CD4-positive, alpha-beta memory T cell (primary cell): ENCODE measurements at regions of chr7 and their contacts with region 1.

Region 1: GRCh38 chr7:150514748-150515222 is at the start of gene GIMAP7:
- DNase-seq: peak; percentile 77 to 84 (median 79)
- H3K4me3 ChIP-seq: peak within 1 kb of the TSS; percentile 92 to 99
- H3K4me3 Mint-ChIP-seq: peak within 1 kb of the TSS; percentile 97 to 100 (median 100)
- H3K27ac ChIP-seq: peak within 1 kb of the TSS; percentile 77
- H3K27ac Mint-ChIP-seq: peak within 1 kb of the TSS; percentile 94 to 99 (median 97)
- H3K4me1 ChIP-seq: peaks cover 47% of the 10 kb centered on the region
- H3K4me1 Mint-ChIP-seq: peaks cover 36 to 54% (median 42%) of the 10 kb centered on the region in 4 donors
- H3K27me3 ChIP-seq: no peaks in the 10 kb centered on the region
- H3K27me3 Mint-ChIP-seq: no peaks in the 10 kb centered on the region
- total RNA-seq, gene GIMAP7: 464 to 476 TPM

Region 2: GRCh38 chr7:148623586-148624282 is 1891.1 kb before region 1 on chr7:
- CTCF ChIA-PET with region 1: no interaction called
- POLR2A ChIA-PET with region 1: no interaction called
- intact Hi-C with region 1: no loop called
- DNase-seq: no peak
- H3K4me3 ChIP-seq: no peak overlapping the region
- H3K4me3 Mint-ChIP-seq: no peak overlapping the region
- H3K27ac ChIP-seq: no peak overlapping the region
- H3K27ac Mint-ChIP-seq: no peak overlapping the region
- H3K4me1 ChIP-seq: peaks cover 21% of the 10 kb centered on the region
- H3K4me1 Mint-ChIP-seq: peaks cover 23 to 47% (median 32%) of the 10 kb centered on the region in 4 donors
- H3K27me3 ChIP-seq: no peaks in the 10 kb centered on the region
- H3K27me3 Mint-ChIP-seq: peaks cover 12 to 20% of the 10 kb centered on the region in 2 donors

Region 3: GRCh38 chr7:150322833-150323681 is 191.7 kb before region 1 on chr7 and contains the starts of genes ACTR3C and LRRC61:
- CTCF ChIA-PET with region 1: no interaction called
- POLR2A ChIA-PET with region 1: no interaction called
- intact Hi-C with region 1: no loop called
- DNase-seq: peak in 4 of 5 donors; percentile 40 to 54 (median 46)
- H3K4me3 ChIP-seq: peak within 1 kb of the TSS; percentile 82 to 96
- H3K4me3 Mint-ChIP-seq: peak within 1 kb of the TSS; percentile 90 to 99 (median 98)
- H3K27ac ChIP-seq: peak within 1 kb of the TSS; percentile 82
- H3K27ac Mint-ChIP-seq: peak within 1 kb of the TSS; percentile 84 to 99 (median 98)
- H3K4me1 ChIP-seq: peaks cover 44% of the 10 kb centered on the region
- H3K4me1 Mint-ChIP-seq: peaks cover 31 to 49% (median 40%) of the 10 kb centered on the region in 4 donors
- H3K27me3 ChIP-seq: no peaks in the 10 kb centered on the region
- H3K27me3 Mint-ChIP-seq: no peaks in the 10 kb centered on the region
- total RNA-seq, gene ACTR3C: 13.0 to 17.8 TPM
- total RNA-seq, gene LRRC61: 11.0 to 12.8 TPM

Region 4: GRCh38 chr7:150466477-150466876 is 48.3 kb before region 1 on chr7:
- CTCF ChIA-PET with region 1: interaction called, 3 read pairs
- POLR2A ChIA-PET with region 1: interaction called, 40 read pairs
- intact Hi-C with region 1: no loop called
- DNase-seq: no peak
- H3K4me3 ChIP-seq: no peak overlapping the region
- H3K4me3 Mint-ChIP-seq: peak overlapping the region in 6 of 8 donors; percentile 4 to 55 (median 38)
- H3K27ac ChIP-seq: peak overlapping the region; percentile 3
- H3K27ac Mint-ChIP-seq: peak overlapping the region in 5 of 7 donors; percentile 30 to 80 (median 54)
- H3K4me1 ChIP-seq: peaks cover 82% of the 10 kb centered on the region
- H3K4me1 Mint-ChIP-seq: peaks cover 65 to 93% (median 75%) of the 10 kb centered on the region in 4 donors
- H3K27me3 ChIP-seq: no peaks in the 10 kb centered on the region
- H3K27me3 Mint-ChIP-seq: no peaks in the 10 kb centered on the region

Region 5: GRCh38 chr7:150502519-150502918 is 12.3 kb before region 1 on chr7:
- CTCF ChIA-PET with region 1: interaction called, 12 read pairs
- POLR2A ChIA-PET with region 1: interaction called, 158 read pairs
- intact Hi-C with region 1: no loop called
- DNase-seq: peak; percentile 56 to 75 (median 67)
- H3K4me3 ChIP-seq: no peak overlapping the region
- H3K4me3 Mint-ChIP-seq: peak overlapping the region; percentile 22 to 86 (median 73)
- H3K27ac ChIP-seq: peak overlapping the region; percentile 51
- H3K27ac Mint-ChIP-seq: peak overlapping the region; percentile 84 to 99 (median 92)
- H3K4me1 ChIP-seq: peaks cover 53% of the 10 kb centered on the region
- H3K4me1 Mint-ChIP-seq: peaks cover 66 to 94% (median 81%) of the 10 kb centered on the region in 4 donors
- H3K27me3 ChIP-seq: no peaks in the 10 kb centered on the region
- H3K27me3 Mint-ChIP-seq: no peaks in the 10 kb centered on the region

Region 6: DNA sequence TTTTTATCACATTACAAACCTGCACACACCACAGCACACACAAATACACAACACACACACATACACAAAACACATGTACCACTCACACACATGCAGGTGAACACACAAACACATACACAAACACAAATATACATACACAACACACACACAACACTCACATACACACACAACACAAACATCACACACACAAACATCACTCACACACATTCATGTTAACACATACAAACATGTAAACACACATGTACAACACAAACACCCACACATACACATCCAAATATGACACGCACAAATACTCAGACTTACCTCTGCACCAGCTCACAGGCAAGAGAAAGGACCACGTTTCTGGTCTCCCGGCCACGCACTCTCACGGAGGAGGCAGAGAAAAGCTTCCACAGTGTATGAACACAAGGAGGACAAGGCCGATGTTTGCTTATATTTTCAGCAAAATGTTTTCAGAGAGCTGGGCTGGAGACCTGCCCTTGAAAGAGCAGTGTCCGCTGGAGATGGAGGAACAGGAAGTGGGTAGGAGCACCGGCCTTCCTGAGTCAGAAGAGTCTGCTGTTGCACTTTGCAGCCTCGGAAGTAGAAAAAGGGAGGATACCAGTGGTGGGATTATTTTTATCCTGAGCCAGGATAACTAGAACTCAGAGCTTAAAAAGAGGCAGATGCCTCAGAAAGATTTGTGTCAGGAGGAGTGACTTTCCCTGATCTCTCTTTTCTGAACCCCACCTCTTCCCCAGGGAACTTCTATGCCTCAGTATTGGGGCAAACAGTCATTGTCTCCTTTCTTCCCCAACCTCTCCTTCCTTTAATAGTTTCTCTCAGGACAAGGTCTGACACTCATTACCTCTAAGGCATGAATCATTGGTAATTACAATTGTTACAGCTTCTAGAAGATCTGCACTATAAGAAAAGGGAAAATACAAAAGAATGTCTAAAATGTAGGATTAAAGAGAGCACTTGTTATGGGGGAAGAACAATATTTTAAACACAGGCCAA is 117.4 kb after region 1 on chr7 and contains the start of gene GIMAP6:
- CTCF ChIA-PET with region 1: interaction called, 5 read pairs
- POLR2A ChIA-PET with region 1: interaction called, 113 read pairs
- intact Hi-C with region 1: loop called (anchors 2 kb)
- DNase-seq: peak; percentile 36 to 51 (median 44)
- H3K4me3 ChIP-seq: peak within 1 kb of the TSS; percentile 69 to 75
- H3K4me3 Mint-ChIP-seq: peak within 1 kb of the TSS; percentile 93 to 100 (median 98)
- H3K27ac ChIP-seq: peak within 1 kb of the TSS; percentile 64
- H3K27ac Mint-ChIP-seq: peak within 1 kb of the TSS; percentile 81 to 99 (median 95)
- H3K4me1 ChIP-seq: peaks cover 79% of the 10 kb centered on the region
- H3K4me1 Mint-ChIP-seq: peaks cover 61 to 88% (median 74%) of the 10 kb centered on the region in 4 donors
- H3K27me3 ChIP-seq: no peaks in the 10 kb centered on the region
- H3K27me3 Mint-ChIP-seq: no peaks in the 10 kb centered on the region
- total RNA-seq, gene GIMAP6: 158 to 173 TPM

Region 7: DNA sequence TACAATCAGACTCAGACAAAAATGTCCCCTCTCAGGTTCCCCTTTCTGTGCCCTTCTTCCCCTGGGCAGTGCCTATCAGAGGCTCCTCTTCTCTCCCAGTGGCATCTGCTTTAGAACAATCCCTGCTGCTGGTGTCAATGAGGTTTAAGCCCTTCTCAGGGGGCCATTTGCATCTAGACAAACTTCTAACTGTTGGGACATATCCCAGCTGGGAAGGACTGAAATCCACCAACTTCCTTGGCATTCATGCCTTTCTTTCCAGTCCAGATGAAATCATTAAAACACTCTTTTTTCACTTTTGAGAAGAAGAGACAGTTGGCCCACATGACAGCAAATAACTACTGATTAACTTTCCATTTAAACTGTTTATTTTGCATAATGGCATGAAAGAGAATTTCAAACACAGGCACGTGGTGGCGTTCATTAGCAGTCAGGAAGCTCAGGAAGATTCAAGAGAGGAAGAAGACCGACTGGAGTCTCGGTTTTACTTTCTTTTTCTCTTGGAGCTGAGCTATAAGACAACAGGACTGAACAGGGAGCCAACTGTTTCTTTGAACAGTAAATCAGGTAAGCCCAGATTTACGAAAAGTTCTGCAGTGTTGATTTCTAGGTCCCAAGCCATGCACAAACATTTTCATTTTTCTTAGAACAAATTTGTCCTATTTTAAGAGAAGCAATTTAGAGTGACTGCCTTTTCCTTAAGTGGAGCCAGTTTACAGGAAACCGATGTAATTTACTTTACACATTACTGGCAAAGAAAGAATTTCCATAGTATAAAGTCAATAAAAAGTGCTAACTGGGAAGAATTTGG is 170.6 kb after region 1 on chr7 and contains the start of gene GIMAP2:
- CTCF ChIA-PET with region 1: interaction called, 6 read pairs
- POLR2A ChIA-PET with region 1: interaction called, 53 read pairs
- intact Hi-C with region 1: loop called (anchors 5 kb)
- DNase-seq: peak; percentile 64 to 69 (median 65)
- H3K4me3 ChIP-seq: peak within 1 kb of the TSS; percentile 80 to 97
- H3K4me3 Mint-ChIP-seq: peak within 1 kb of the TSS; percentile 94 to 99 (median 98)
- H3K27ac ChIP-seq: peak within 1 kb of the TSS; percentile 90
- H3K27ac Mint-ChIP-seq: peak within 1 kb of the TSS; percentile 90 to 99 (median 97)
- H3K4me1 ChIP-seq: peaks cover 60% of the 10 kb centered on the region
- H3K4me1 Mint-ChIP-seq: peaks cover 55 to 97% (median 74%) of the 10 kb centered on the region in 4 donors
- H3K27me3 ChIP-seq: no peaks in the 10 kb centered on the region
- H3K27me3 Mint-ChIP-seq: no peaks in the 10 kb centered on the region
- total RNA-seq, gene GIMAP2: 238 to 244 TPM

Region 8: GRCh38 chr7:151168003-151168786 is 653.4 kb after region 1 on chr7:
- CTCF ChIA-PET with region 1: no interaction called
- POLR2A ChIA-PET with region 1: no interaction called
- intact Hi-C with region 1: no loop called
- DNase-seq: peak; percentile 52 to 65 (median 59)
- H3K4me3 ChIP-seq: peak overlapping the region in 1 of 2 donors; percentile 33
- H3K4me3 Mint-ChIP-seq: peak overlapping the region; percentile 73 to 89 (median 84)
- H3K27ac ChIP-seq: no peak overlapping the region
- H3K27ac Mint-ChIP-seq: peak overlapping the region in 5 of 7 donors; percentile 22 to 72 (median 69)
- H3K4me1 ChIP-seq: peaks cover 6% of the 10 kb centered on the region
- H3K4me1 Mint-ChIP-seq: peaks cover 10 to 24% (median 17%) of the 10 kb centered on the region in 4 donors
- H3K27me3 ChIP-seq: peaks cover 33% of the 10 kb centered on the region
- H3K27me3 Mint-ChIP-seq: peaks cover 26 to 37% of the 10 kb centered on the region in 2 donors